ENCODE measurements at regions of chr10 and their contacts with region 1.

Region 1: DNA sequence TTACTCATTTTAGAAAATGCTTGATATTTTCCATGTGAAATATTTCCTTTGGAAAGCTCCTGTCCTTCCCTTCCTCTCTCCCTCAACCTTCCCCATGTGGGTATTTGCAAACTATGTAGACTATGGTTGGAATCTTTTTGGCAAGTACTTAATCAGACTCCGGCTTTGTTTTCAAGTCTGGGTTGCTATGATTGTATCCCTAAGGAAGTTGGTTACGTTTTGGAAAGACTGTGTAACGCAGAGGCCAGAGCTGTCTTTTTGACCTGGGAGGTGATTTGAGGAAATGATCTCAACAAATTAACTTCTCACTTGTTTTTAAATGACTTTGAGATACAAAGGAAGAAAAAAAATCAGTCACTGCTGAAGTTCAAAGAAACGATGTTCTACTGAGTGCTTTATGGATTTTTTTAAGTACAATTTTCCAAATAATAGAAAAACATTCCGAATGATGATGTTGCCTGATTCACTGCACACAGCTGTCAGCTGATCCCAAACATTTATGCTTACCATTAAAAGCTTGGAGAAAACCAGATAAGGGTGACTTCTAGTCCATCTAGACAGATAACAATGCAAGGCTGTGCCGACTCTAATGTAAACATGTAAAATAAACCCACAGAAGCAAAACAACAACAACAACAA is 145.5 kb upstream of the CELF2 start:
- DNase-seq: peak; percentile 35
- ATAC-seq: peak; percentile 91 to 98

Region 2: GRCh38 chr10:10831085-10831484 is 41.1 kb before region 1 on chr10:
- intact Hi-C with region 1: loop called in 1 of 2 experiments (anchors 5 kb)
- DNase-seq: peak; percentile 73
- ATAC-seq: peak; percentile 44 to 80

Region 3: GRCh38 chr10:10977978-10978377 is 105.8 kb after region 1 on chr10:
- intact Hi-C with region 1: no loop called
- DNase-seq: no peak
- ATAC-seq: peak in 1 of 2 donors; percentile 35